ENCODE measurements at regions of chr19 and their contacts with region 1.

Region 1: GRCh38 chr19:10194500-10195289 is at the start of gene DNMT1:
- DNase-seq: peak; percentile 92 to 97
- ATAC-seq: peak; percentile 94 to 98 (median 95)
- H3K4me3 ChIP-seq: peak within 1 kb of the TSS; percentile 65
- H3K4me3 Mint-ChIP-seq: peak within 1 kb of the TSS; percentile 93
- H3K27ac ChIP-seq: peak within 1 kb of the TSS; percentile 52
- H3K27ac Mint-ChIP-seq: peak within 1 kb of the TSS; percentile 86 to 94
- H3K4me1 ChIP-seq: peaks cover 41% of the 10 kb centered on the region
- H3K4me1 Mint-ChIP-seq: peaks cover 33 to 34% of the 10 kb centered on the region in 2 donors
- H3K27me3 ChIP-seq: no peaks in the 10 kb centered on the region
- H3K27me3 Mint-ChIP-seq: no peaks in the 10 kb centered on the region
- CTCF ChIP-seq: no peak
- total RNA-seq, gene DNMT1: 266 to 323 (median 275) TPM

Region 2: DNA sequence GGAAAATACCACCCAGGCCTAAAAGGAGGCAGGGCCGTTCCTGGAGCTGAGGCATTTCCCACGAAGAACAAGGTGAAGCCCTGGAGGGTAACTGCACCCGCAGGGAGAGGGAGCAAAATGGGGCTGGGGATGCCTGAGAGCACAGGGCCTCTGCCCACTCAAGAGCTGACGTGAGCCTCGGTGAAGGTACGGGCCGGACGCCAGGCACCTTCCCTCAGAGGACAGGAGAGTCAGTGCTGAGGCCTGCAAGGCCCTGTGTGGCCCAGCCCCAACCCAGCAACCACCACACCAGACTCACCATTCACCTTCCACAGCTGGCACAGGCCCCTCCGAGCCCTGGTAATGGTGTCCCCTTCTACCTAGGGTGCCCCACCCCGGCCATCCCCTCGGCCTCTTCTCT is 36.2 kb before region 1 on chr19:
- intact Hi-C with region 1: no loop called
- DNase-seq: no peak
- ATAC-seq: no peak
- H3K4me3 ChIP-seq: no peak overlapping the region
- H3K4me3 Mint-ChIP-seq: no peak overlapping the region
- H3K27ac ChIP-seq: no peak overlapping the region
- H3K27ac Mint-ChIP-seq: peak overlapping the region in 1 of 2 donors; percentile 66
- H3K4me1 ChIP-seq: no peaks in the 10 kb centered on the region
- H3K4me1 Mint-ChIP-seq: peaks cover 0 to 8% of the 10 kb centered on the region in 2 donors
- H3K27me3 ChIP-seq: no peaks in the 10 kb centered on the region
- H3K27me3 Mint-ChIP-seq: no peaks in the 10 kb centered on the region
- CTCF ChIP-seq: no peak

Region 3: GRCh38 chr19:10230861-10231611 is 36.3 kb after region 1 on chr19 and contains the start of gene S1PR2:
- intact Hi-C with region 1: loop called (anchors 2 kb)
- DNase-seq: peak; percentile 68 to 88
- ATAC-seq: peak; percentile 49 to 66 (median 55)
- H3K4me3 ChIP-seq: peak within 1 kb of the TSS; percentile 88
- H3K4me3 Mint-ChIP-seq: peak within 1 kb of the TSS; percentile 92
- H3K27ac ChIP-seq: peak within 1 kb of the TSS; percentile 86
- H3K27ac Mint-ChIP-seq: peak within 1 kb of the TSS; percentile 86 to 88
- H3K4me1 ChIP-seq: peaks cover 45% of the 10 kb centered on the region
- H3K4me1 Mint-ChIP-seq: peaks cover 9 to 18% of the 10 kb centered on the region in 2 donors
- H3K27me3 ChIP-seq: no peaks in the 10 kb centered on the region
- H3K27me3 Mint-ChIP-seq: no peaks in the 10 kb centered on the region
- CTCF ChIP-seq: no peak
- total RNA-seq, gene S1PR2: 6.8 to 12.6 (median 9.5) TPM

Region 4: DNA sequence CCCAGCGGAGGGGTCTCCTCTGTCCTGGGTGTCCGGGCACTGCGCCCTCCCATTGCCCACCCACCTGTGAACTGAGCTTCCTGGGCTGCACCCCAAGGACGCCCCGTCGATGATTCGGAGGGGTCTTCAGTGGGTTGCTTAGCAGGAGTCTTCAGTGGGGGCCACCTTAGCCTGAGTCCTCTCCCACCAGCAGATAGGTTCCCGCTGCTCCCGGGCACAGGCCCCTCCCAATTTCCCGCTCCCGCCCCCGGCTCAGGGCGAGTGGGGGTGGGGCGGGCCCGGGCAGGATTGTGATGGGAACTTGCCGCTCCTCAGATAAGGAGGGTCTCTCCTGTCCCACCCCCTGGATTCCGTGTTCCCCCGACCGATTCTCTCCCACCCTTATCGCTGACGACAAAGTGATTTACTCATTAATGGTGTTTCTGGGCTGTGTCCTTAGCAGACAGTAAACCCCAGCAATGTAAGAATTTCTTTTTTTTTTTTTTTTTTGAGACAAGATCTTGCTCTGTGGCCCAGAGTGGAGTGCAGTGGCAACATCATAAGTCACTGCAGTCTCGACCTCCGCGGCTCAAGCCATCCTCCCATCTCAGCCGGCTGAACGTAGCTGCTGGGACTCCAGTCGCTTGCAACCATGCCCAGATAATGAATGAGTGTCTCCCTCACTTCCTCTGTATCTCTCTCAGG is 323.2 kb after region 1 on chr19:
- intact Hi-C with region 1: no loop called
- DNase-seq: peak; percentile 61 to 74
- ATAC-seq: peak; percentile 20 to 33 (median 29)
- H3K4me3 ChIP-seq: peak overlapping the region; percentile 97
- H3K4me3 Mint-ChIP-seq: peak overlapping the region; percentile 81
- H3K27ac ChIP-seq: peak overlapping the region; percentile 89
- H3K27ac Mint-ChIP-seq: peak overlapping the region; percentile 86 to 91
- H3K4me1 ChIP-seq: peaks cover 80% of the 10 kb centered on the region
- H3K4me1 Mint-ChIP-seq: peaks cover 60 to 67% of the 10 kb centered on the region in 2 donors
- H3K27me3 ChIP-seq: peaks cover 2% of the 10 kb centered on the region
- H3K27me3 Mint-ChIP-seq: peaks cover 0 to 3% of the 10 kb centered on the region in 2 donors
- CTCF ChIP-seq: no peak